CD4-positive, alpha-beta T cell (primary cell): ENCODE measurements at regions of chr16 and their contacts with region 1.

Region 1: DNA sequence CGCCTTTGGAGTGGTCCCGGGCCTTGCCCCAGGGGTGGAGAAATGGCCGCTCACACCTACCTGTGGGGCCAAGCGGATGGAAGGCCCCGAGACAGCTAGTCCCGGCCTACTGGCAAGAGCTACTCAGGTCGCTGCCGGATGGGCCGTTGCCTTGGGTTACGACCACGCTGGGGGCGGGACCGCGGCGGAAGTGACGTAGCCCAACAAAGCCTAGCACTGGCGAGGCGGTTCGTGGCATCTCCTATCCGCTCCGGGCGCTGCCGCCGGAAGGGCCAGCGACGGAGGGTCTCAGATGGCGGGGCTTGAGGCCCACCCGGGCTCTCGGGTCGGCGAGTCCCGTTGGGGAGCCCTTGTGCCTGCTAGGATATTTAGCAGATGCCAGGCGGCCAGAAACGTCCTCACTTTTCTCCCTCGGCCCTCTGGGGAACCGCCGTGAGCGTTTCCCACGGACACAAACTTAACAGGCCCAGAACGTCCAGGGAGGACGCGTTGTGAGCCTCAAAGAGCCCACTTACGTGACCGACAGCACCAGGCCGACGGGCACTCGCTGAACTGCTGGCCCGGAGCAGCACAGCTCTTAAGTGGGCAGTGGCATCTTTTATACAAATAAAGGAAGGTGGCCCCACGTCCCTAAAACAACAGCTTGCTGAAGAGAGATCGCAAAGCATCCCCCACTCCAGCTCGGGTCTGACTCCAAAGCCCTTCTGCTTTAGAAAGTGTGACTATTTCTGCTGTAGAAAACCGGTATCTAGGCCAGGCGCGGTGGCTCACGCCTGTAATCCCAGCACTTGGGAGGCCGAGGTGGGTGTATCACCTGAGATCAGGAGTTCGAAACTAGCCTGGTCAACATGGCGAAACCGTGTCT is at the start of gene C16orf46:
- DNase-seq: peak; percentile 93 to 99 (median 96)
- ATAC-seq: peak; percentile 68
- H3K4me3 ChIP-seq: peak within 1 kb of the TSS; percentile 90
- H3K4me3 Mint-ChIP-seq: no peak within 1 kb of the TSS
- H3K27ac ChIP-seq: peak within 1 kb of the TSS; percentile 95 to 97
- H3K27ac Mint-ChIP-seq: no peak within 1 kb of the TSS
- H3K4me1 ChIP-seq: peaks cover 15% of the 10 kb centered on the region
- H3K4me1 Mint-ChIP-seq: no peaks in the 10 kb centered on the region
- H3K27me3 ChIP-seq: no peaks in the 10 kb centered on the region
- H3K27me3 Mint-ChIP-seq: no peaks in the 10 kb centered on the region
- CTCF ChIP-seq: no peak
- total RNA-seq, gene C16orf46: 0.55 TPM in 1 of 2 experiments, not detected in the other

Region 2: DNA sequence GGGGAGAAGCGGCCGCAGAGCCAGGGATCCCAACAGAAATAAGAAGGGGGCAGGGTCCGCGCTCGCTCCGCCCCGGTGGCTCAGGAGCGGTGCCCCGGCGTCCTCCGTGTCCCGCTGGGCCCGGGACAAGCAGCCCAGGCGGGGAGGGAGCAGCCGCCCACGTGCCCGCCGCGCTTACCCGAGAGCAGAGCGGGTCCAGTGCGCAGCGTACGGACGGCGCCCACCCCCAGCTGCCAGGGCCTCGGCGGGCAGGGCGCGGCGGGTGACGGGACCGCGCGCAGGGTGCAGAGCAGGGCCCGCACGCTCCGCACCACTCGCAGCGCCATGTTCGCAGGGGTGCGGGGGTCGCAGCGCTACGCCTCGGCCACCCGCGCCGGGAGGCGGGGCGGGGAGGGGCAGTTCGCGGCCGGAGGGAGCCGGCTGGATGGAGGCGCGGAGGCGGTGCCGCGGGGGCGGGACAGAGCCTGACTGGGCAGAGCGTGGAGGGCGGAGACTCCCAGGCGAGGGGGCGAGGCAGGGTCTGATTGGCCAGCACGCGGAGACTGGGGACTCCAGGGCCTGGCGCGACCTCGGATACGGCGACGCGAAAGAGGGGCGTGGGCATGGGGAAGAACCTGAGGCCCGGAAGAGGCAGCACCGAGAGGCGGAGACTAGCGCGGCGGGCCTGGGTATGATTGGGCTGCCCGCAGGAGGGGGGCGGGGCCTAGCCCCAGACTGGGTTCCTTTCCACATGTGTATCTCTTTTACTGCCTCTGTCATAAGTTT is 18.8 kb after region 1 on chr16 and contains the start of gene GCSH:
- CTCF ChIA-PET with region 1: interaction called, 3 read pairs
- POLR2A ChIA-PET with region 1: interaction called, 3 read pairs
- intact Hi-C with region 1: loop called (anchors 1 kb)
- DNase-seq: peak; percentile 95 to 100 (median 98)
- ATAC-seq: peak; percentile 96
- H3K4me3 ChIP-seq: peak within 1 kb of the TSS; percentile 74
- H3K4me3 Mint-ChIP-seq: peak within 1 kb of the TSS; percentile 96
- H3K27ac ChIP-seq: peak within 1 kb of the TSS in 1 of 2 donors; percentile 16
- H3K27ac Mint-ChIP-seq: peak within 1 kb of the TSS; percentile 77
- H3K4me1 ChIP-seq: peaks cover 17% of the 10 kb centered on the region
- H3K4me1 Mint-ChIP-seq: peaks cover 17% of the 10 kb centered on the region
- H3K27me3 ChIP-seq: no peaks in the 10 kb centered on the region
- H3K27me3 Mint-ChIP-seq: no peaks in the 10 kb centered on the region
- CTCF ChIP-seq: no peak
- total RNA-seq, gene GCSH: 2.3 to 3.2 TPM

Region 3: GRCh38 chr16:81140930-81141780 is 63.8 kb after region 1 on chr16:
- CTCF ChIA-PET with region 1: no interaction called
- POLR2A ChIA-PET with region 1: no interaction called
- intact Hi-C with region 1: no loop called
- DNase-seq: no peak
- ATAC-seq: no peak
- H3K4me3 ChIP-seq: no peak overlapping the region
- H3K4me3 Mint-ChIP-seq: no peak overlapping the region
- H3K27ac ChIP-seq: no peak overlapping the region
- H3K27ac Mint-ChIP-seq: no peak overlapping the region
- H3K4me1 ChIP-seq: no peaks in the 10 kb centered on the region
- H3K4me1 Mint-ChIP-seq: no peaks in the 10 kb centered on the region
- H3K27me3 ChIP-seq: no peaks in the 10 kb centered on the region
- H3K27me3 Mint-ChIP-seq: peaks cover 7% of the 10 kb centered on the region
- CTCF ChIP-seq: no peak

Region 4: DNA sequence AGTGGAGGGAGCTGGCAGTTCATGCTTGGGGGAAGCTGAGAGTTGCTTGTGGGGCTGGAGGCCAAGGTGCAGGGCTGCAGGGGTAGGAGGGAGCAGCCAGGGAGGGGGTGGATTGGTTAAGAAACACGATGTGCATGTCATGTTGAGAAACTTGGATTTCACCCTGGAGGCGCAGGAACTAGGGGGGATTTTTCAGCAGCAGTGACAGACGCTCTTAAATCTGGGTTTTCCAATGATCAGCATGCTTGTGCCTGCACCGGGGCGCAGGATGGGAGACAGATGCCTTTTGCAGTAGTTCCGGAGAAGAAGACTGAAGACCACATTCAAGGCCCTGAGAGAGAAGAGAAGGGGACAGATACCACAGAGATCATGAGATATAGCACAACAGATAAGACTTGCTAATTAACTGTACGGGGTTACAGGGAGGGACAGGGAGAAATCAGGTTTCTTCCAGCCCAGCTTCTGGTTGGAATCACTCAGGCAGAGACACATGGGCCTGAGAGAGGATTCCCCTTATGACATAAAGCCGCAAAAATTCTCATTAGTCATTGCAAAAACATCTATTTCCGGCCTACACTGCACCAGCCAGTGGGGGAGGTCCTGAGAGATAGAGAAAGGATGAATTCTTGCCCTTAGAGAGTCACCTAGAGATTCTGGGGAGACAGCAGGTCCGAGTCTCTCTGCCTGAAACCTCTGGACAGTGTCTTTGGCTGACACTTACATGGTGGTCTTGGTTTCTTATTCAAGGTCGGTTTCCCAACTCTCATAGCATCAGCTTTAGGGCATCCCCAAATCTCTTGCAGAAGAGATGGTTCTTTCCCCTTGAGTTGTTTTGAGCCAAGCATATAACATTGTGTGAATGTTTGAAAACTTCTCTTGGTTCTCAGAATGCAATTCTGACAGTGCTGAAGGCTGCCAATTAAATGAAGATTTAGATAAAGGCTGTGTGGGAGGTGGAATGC is 1576.5 kb after region 1 on chr16:
- CTCF ChIA-PET with region 1: no interaction called
- POLR2A ChIA-PET with region 1: no interaction called
- intact Hi-C with region 1: loop called in 1 of 2 experiments (anchors 5 kb)
- DNase-seq: peak in 13 of 14 experiments; percentile 5 to 83 (median 28)
- ATAC-seq: peak; percentile 62
- H3K4me3 ChIP-seq: no peak overlapping the region
- H3K4me3 Mint-ChIP-seq: peak overlapping the region; percentile 52
- H3K27ac ChIP-seq: peak overlapping the region; percentile 71 to 80
- H3K27ac Mint-ChIP-seq: peak overlapping the region; percentile 86
- H3K4me1 ChIP-seq: peaks cover 77% of the 10 kb centered on the region
- H3K4me1 Mint-ChIP-seq: peaks cover 99% of the 10 kb centered on the region
- H3K27me3 ChIP-seq: no peaks in the 10 kb centered on the region
- H3K27me3 Mint-ChIP-seq: no peaks in the 10 kb centered on the region
- CTCF ChIP-seq: no peak